Activated T-helper 2 cell treated with anti-CD3 and anti-CD28 coated beads, Interferon-gamma antibody, Interleukin-2, Interleukin-4, amounts not matched to agents 10 μg/mL and 5 μg/mL and 100 μg/mL, durations not matched to agents 14 hours and 24 hours and 36 hours (primary cell): ENCODE measurements at regions of chr2 and their contacts with region 1.

Region 1: DNA sequence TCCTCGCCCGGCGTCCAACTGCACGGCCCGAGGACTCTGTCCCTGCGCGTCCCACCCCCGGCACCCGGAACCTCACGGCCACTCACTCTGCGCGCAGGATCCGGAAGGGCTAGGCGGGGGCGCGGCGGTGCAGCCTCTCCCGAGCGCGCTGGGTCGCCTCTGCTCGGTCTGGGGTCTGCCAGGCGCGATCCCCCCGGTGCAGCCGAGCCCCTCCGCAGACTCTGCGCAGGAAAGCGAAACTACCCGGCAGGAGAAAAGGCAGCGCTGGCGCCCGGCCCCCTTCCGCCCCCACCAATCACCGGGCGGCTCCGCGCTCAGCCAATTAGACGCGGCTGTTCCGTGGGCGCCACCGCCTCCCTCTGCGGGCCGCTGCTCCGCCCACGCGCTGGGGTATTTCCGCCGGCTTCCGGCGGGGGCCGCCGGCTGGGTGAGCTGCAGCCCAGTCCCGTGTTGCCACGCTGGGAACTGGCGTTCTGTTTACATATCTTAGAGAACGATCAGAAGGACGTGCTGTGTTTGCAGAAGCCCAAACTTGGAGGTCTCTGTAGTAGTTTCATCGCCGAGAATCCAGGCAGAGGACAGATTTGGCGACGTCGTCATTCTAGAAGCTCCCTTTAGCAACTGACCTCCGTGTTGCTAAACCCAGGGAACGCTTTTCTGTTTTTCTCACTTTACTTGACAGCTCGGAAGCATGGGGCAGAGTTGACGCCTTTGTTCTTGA is at the start of gene STAT1:
- DNase-seq: peak; percentile 96
- H3K4me3 Mint-ChIP-seq: no peak within 1 kb of the TSS
- H3K27ac Mint-ChIP-seq: no peak within 1 kb of the TSS
- H3K4me1 Mint-ChIP-seq: peaks cover 40% of the 10 kb centered on the region
- H3K27me3 Mint-ChIP-seq: no peaks in the 10 kb centered on the region
- total RNA-seq, gene STAT1: 135 and 139 TPM in 2 replicates

Region 2: GRCh38 chr2:190996338-190996946 is 17.6 kb before region 1 on chr2:
- intact Hi-C with region 1: loop called (anchors 2 kb)
- DNase-seq: no peak
- H3K4me3 Mint-ChIP-seq: no peak overlapping the region
- H3K27ac Mint-ChIP-seq: peak overlapping the region; percentile 77
- H3K4me1 Mint-ChIP-seq: peaks cover 59% of the 10 kb centered on the region
- H3K27me3 Mint-ChIP-seq: no peaks in the 10 kb centered on the region

Region 3: GRCh38 chr2:191038241-191038725 is 24.2 kb after region 1 on chr2:
- intact Hi-C with region 1: no loop called
- DNase-seq: no peak
- H3K4me3 Mint-ChIP-seq: peak overlapping the region; percentile 31
- H3K27ac Mint-ChIP-seq: peak overlapping the region; percentile 19
- H3K4me1 Mint-ChIP-seq: peaks cover 38% of the 10 kb centered on the region
- H3K27me3 Mint-ChIP-seq: no peaks in the 10 kb centered on the region

Region 4: DNA sequence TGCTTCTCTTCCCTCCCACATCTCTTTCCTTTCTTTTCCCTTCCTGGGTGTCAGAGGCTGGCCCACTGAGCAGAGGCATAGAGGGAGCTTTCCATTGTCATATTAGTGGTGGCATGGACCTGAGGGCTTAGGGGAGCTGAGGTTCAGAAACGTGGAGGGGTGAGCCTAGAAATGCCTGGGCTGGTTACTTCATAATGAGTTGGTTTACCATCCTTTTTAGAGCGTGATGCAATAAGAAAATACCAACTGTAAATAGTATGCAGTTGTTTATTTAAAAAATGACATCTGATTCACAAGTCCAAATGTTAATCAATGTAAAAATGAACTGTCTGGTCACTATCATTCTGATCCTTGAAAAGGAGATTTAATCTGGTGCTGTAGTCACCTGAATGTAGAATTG is 277.4 kb after region 1 on chr2:
- intact Hi-C with region 1: no loop called
- DNase-seq: no peak
- H3K4me3 Mint-ChIP-seq: no peak overlapping the region
- H3K27ac Mint-ChIP-seq: no peak overlapping the region
- H3K4me1 Mint-ChIP-seq: peaks cover 19% of the 10 kb centered on the region
- H3K27me3 Mint-ChIP-seq: no peaks in the 10 kb centered on the region